T-cell (primary cell): ENCODE measurements at regions of chr1 and their contacts with region 1.

Region 1: DNA sequence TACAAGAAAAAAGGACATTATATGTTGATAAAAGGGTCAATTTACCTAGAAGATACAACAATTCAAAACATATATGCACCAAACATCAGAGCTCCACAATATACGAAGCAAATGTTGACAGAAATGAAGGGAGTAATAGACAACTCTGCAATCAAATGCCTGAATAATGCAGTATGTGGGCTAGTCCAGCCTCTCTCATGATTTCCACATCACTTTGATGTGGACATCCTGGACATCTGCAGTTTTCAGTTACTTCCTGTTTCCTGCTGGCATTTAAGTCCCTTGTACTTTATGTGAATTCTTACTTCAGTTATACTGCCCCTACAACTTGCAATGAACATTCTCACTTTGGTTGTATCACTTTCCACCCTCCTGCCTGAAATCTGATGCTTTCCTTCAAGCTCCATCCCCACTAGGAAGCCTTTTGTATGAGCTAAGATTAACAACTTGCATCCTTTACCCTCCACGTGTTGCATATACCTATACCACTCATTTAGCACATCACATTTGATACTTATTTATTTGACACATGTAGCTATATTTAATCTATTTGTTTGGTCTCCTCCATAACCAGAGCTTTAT is 36.7 kb downstream of the DISC1 start:
- DNase-seq: no peak
- ATAC-seq: no peak
- H3K4me3 ChIP-seq: no peak overlapping the region
- H3K4me3 Mint-ChIP-seq: no peak overlapping the region
- H3K27ac ChIP-seq: no peak overlapping the region
- H3K27ac Mint-ChIP-seq: no peak overlapping the region
- H3K4me1 ChIP-seq: peaks cover 0 to 4% of the 10 kb centered on the region in 2 experiments
- H3K4me1 Mint-ChIP-seq: peaks cover 29 to 60% (median 41%) of the 10 kb centered on the region in 3 donors
- H3K27me3 ChIP-seq: peaks cover 0 to 6% of the 10 kb centered on the region in 2 experiments
- H3K27me3 Mint-ChIP-seq: no peaks in the 10 kb centered on the region

Region 2: DNA sequence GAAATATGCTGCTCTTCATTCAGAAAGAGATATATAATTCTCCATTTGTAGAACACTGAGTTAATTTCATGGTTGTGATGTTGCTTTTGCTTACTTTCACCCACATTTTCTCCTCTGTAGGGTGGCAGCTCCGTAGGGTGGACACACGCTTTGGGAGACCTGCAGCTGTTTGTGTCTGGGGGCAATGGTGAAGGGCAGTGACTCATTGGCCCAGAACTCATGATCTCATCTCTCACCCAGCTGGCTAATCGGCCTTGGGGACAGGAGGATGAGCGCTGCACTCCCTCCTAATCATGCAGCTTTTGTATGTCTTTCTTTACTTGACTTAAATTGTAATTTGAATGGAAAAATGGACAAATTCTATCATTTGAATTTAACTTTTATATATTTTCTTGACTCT is 27.1 kb before region 1 on chr1:
- CTCF ChIA-PET with region 1: no interaction called
- POLR2A ChIA-PET with region 1: interaction called in 1 of 2 experiments, 10 read pairs
- DNase-seq: no peak
- ATAC-seq: no peak
- H3K4me3 ChIP-seq: no peak overlapping the region
- H3K4me3 Mint-ChIP-seq: no peak overlapping the region
- H3K27ac ChIP-seq: no peak overlapping the region
- H3K27ac Mint-ChIP-seq: peak overlapping the region in 1 of 2 donors; percentile 54
- H3K4me1 ChIP-seq: no peaks in the 10 kb centered on the region
- H3K4me1 Mint-ChIP-seq: peaks cover 27 to 40% (median 35%) of the 10 kb centered on the region in 3 donors
- H3K27me3 ChIP-seq: no peaks in the 10 kb centered on the region
- H3K27me3 Mint-ChIP-seq: no peaks in the 10 kb centered on the region

Region 3: GRCh38 chr1:231684356-231685244 is 21.3 kb after region 1 on chr1:
- CTCF ChIA-PET with region 1: no interaction called
- POLR2A ChIA-PET with region 1: no interaction called
- DNase-seq: no peak
- ATAC-seq: no peak
- H3K4me3 ChIP-seq: no peak overlapping the region
- H3K4me3 Mint-ChIP-seq: no peak overlapping the region
- H3K27ac ChIP-seq: no peak overlapping the region
- H3K27ac Mint-ChIP-seq: no peak overlapping the region
- H3K4me1 ChIP-seq: no peaks in the 10 kb centered on the region
- H3K4me1 Mint-ChIP-seq: peaks cover 4 to 16% (median 6%) of the 10 kb centered on the region in 3 donors
- H3K27me3 ChIP-seq: peaks cover 0 to 7% of the 10 kb centered on the region in 2 experiments
- H3K27me3 Mint-ChIP-seq: no peaks in the 10 kb centered on the region

Region 4: DNA sequence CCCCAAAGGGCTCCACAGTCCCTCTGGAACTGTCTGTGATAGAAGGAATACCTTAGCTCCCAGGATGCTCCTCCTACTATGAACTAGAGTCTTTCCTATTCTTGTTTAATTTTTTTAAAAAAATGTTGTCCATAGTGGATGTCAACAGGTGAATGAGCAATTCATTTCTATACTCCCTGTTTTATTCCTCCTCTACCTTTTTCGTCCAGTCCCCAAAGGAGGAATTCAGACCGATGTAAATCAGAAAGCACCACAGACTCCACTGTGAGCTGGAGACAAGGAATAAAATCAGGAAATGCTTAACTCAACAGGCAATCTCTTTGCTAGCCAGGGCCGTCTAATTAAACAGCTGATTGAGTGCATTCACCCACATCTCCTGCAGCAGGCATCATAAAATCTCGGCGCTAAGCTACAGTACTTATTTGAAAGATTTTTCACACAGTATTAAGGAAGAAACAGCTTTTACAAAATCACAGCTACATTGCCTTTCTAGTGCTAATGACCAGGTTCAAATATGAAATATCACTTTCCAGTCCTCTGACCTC is 585.0 kb after region 1 on chr1:
- CTCF ChIA-PET with region 1: no interaction called
- POLR2A ChIA-PET with region 1: no interaction called
- DNase-seq: no peak
- ATAC-seq: no peak
- H3K4me3 ChIP-seq: no peak overlapping the region
- H3K4me3 Mint-ChIP-seq: no peak overlapping the region
- H3K27ac ChIP-seq: no peak overlapping the region
- H3K27ac Mint-ChIP-seq: no peak overlapping the region
- H3K4me1 ChIP-seq: no peaks in the 10 kb centered on the region
- H3K4me1 Mint-ChIP-seq: peaks cover 0 to 7% (median 2%) of the 10 kb centered on the region in 3 donors
- H3K27me3 ChIP-seq: peaks cover 0 to 3% of the 10 kb centered on the region in 2 experiments
- H3K27me3 Mint-ChIP-seq: peaks cover 28 to 55% of the 10 kb centered on the region in 2 donors